CD8-positive, alpha-beta T cell (primary cell): ENCODE measurements at regions of chr19 and their contacts with region 1.

Region 1: DNA sequence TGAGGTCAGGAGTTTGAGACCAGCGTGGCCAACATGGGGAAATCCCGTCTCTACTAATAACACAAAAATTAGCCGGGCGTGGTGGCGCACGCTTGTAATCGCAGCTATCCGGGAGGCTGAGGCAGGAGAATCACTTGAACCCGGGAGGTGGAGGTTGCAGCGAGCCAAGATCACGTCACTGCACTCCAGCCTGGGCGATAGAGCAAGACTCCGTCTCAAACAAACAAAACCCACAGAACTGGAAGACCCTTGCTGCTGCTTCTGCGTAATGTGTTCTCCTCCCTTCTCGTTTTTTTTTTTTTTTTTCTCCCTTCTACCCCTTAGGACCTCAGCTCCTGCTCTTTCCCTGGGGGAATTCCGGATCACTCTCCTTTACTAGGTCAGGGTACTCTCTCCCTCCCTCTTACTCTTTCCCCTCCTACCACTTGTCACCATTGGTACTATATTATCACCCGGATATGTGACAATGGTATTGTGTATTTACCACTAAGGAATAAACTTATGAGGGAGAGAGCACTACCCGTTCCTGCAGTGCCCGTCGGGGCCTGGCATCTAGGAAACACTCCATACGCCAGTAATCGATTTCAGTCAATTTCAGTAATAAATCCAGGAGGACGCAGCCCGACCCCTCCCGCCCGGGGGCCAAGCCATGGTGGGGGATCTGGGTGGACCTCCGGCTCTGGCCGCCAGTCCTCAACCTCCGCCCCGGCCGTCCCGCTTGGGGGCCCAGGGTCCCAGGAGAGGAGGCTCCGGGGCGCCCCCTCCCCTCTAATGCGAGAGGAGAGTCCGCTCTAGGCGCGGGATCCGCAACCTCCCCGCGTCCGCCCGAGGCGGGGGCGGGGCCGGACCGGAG is 429 bp upstream of the GARRE1 start:
- DNase-seq: peak in 4 of 9 experiments; percentile 68 to 91 (median 86)
- ATAC-seq: peak; percentile 39
- H3K4me3 ChIP-seq: peak overlapping the region; percentile 78 to 84
- H3K4me3 Mint-ChIP-seq: peak overlapping the region; percentile 98
- H3K27ac ChIP-seq: peak overlapping the region; percentile 87 to 91
- H3K27ac Mint-ChIP-seq: peak overlapping the region; percentile 99
- H3K4me1 ChIP-seq: peaks cover 31% of the 10 kb centered on the region
- H3K4me1 Mint-ChIP-seq: peaks cover 31% of the 10 kb centered on the region
- H3K27me3 ChIP-seq: no peaks in the 10 kb centered on the region
- H3K27me3 Mint-ChIP-seq: no peaks in the 10 kb centered on the region
- CTCF ChIP-seq: no peak

Region 2: GRCh38 chr19:34269968-34270621 is 16.2 kb after region 1 on chr19:
- CTCF ChIA-PET with region 1: interaction called, 5 read pairs
- POLR2A ChIA-PET with region 1: interaction called, 10 read pairs
- intact Hi-C with region 1: loop called (anchors 1 kb)
- DNase-seq: peak; percentile 42 to 91 (median 72)
- ATAC-seq: peak; percentile 92
- H3K4me3 ChIP-seq: peak overlapping the region; percentile 4 to 5
- H3K4me3 Mint-ChIP-seq: peak overlapping the region; percentile 55
- H3K27ac ChIP-seq: peak overlapping the region; percentile 57 to 82
- H3K27ac Mint-ChIP-seq: peak overlapping the region; percentile 97
- H3K4me1 ChIP-seq: peaks cover 69% of the 10 kb centered on the region
- H3K4me1 Mint-ChIP-seq: peaks cover 80% of the 10 kb centered on the region
- H3K27me3 ChIP-seq: no peaks in the 10 kb centered on the region
- H3K27me3 Mint-ChIP-seq: no peaks in the 10 kb centered on the region
- CTCF ChIP-seq: no peak

Region 3: GRCh38 chr19:34308381-34309367 is 54.7 kb after region 1 on chr19:
- CTCF ChIA-PET with region 1: no interaction called
- POLR2A ChIA-PET with region 1: no interaction called
- intact Hi-C with region 1: loop called in 1 of 2 experiments (anchors 5 kb)
- DNase-seq: peak in 5 of 9 experiments; percentile 7 to 83 (median 49)
- ATAC-seq: peak; percentile 85
- H3K4me3 ChIP-seq: no peak overlapping the region
- H3K4me3 Mint-ChIP-seq: peak overlapping the region; percentile 1
- H3K27ac ChIP-seq: peak overlapping the region; percentile 23 to 67
- H3K27ac Mint-ChIP-seq: peak overlapping the region; percentile 90
- H3K4me1 ChIP-seq: peaks cover 44% of the 10 kb centered on the region
- H3K4me1 Mint-ChIP-seq: peaks cover 48% of the 10 kb centered on the region
- H3K27me3 ChIP-seq: no peaks in the 10 kb centered on the region
- H3K27me3 Mint-ChIP-seq: no peaks in the 10 kb centered on the region
- CTCF ChIP-seq: no peak

Region 4: DNA sequence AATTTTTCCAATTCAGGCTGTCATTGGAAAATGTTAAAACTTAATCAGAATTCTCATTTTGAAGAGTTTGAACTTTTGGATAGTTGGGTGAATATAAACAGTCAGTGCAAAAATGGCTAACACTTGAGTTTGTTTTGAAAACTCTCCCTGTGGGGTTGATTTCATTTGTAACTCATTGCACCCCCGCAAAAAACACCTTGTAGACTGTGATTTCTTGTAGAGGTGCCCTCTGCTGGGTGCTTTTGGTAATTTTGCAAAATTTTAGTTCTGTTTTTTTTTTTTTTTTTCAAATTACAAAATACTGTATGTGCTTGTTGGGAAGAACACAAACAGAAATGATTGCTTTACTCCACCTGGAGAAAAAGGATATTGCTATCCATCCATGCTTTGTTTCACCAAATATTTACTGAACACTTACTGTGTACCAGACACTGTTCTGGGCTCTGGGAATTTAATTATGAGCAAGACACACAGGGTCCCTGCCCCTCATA is 82.9 kb after region 1 on chr19:
- CTCF ChIA-PET with region 1: no interaction called
- POLR2A ChIA-PET with region 1: no interaction called
- intact Hi-C with region 1: loop called (anchors 1 kb)
- DNase-seq: peak in 7 of 9 experiments; percentile 20 to 76 (median 56)
- ATAC-seq: peak; percentile 70
- H3K4me3 ChIP-seq: no peak overlapping the region
- H3K4me3 Mint-ChIP-seq: no peak overlapping the region
- H3K27ac ChIP-seq: no peak overlapping the region
- H3K27ac Mint-ChIP-seq: peak overlapping the region; percentile 57
- H3K4me1 ChIP-seq: peaks cover 8% of the 10 kb centered on the region
- H3K4me1 Mint-ChIP-seq: peaks cover 7% of the 10 kb centered on the region
- H3K27me3 ChIP-seq: no peaks in the 10 kb centered on the region
- H3K27me3 Mint-ChIP-seq: no peaks in the 10 kb centered on the region
- CTCF ChIP-seq: peak; percentile 92